ENCODE measurements at regions of chr17 and their contacts with region 1.

Region 1: DNA sequence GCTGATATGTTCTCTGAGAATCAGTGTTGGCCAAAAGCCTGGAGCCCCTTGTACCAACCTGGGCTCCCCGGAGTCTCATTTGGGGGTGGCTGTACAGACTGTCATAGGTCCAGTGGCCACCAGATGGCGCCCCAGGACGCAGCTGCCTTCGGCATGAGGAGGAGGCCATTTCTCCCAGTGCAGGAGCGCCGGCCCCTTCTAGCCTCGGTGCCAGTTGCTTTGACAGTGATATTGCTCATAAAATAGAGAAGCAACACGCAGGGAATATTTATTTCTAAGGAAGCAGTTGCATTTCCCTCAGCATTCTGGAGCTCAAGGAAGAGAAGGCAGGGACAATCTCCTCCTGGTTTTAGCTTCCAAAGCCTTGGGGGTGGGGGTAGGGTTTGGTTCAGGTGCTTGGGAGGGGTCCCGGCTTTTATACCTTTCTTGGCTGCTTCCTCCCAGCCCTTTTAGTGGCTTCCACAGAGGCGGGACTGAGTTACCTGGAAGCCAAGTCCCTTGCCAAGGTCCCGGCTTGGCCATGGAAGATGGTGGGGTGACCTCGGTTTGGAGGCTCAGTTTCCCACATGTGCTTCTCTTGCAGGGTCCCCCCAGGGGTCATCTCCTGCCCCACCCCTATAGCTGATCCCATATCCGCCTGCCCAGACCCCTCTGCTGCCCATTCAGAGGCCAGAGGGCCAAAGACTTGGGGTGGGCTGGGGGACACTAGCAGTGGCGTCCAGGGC is 117.8 kb upstream of the CDC42EP4 start:
- DNase-seq: peak; percentile 46 to 98
- H3K4me3 ChIP-seq: no peak overlapping the region
- H3K27ac ChIP-seq: no peak overlapping the region
- H3K4me1 ChIP-seq: peaks cover 0 to 6% (median 1%) of the 10 kb centered on the region in 4 experiments; a peak in 3 of 7 replicates
- H3K27me3 ChIP-seq: no peaks in the 10 kb centered on the region
- CTCF ChIP-seq: peak; percentile 92 to 97 (median 92)
- EP300 ChIP-seq: no peak
- POLR2A ChIP-seq: no peak
- RAD21 ChIP-seq: peak; percentile 96 to 98

Region 2: DNA sequence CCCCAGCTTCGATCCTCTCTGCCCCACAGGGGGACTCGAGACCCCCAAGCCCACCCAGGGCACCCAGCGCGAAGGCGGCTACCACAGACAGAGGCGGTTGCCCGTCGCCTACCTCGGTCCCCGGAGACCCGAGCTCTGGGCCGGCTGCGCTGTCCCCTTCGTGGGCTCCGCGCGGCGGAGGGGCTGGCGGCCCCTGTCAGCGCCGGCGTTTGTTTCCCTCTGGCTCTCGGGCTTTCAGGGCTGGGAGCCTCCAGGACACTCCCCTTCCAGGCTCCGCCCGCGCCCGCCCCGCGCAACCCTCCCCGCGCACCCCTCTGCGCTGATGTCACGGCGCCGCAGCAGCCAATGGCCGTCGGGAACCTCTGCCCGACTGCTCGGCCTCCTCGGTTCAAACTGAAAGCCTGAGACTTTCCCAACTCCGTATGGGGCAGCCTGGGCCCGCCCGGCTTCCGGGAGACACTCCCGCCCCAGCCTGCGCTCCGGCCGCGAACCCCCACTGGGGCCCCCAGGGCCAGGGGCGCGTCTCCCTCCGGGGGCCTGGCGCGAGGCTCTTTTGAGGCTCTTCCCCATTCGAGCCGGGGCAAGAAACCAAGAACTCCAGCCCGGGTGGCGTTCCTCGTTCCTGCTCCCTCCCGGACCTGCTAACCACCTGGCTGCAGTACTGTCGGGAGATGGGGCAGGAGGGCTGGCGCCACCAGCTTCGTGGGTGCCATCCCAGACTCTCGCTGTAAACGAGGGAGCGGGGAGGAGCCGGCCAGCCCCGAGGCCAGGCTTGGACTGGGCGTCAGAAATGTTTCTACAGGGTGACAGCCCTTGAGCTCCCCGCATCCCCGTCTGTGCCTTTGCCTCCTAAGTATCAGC is 117.6 kb before region 1 on chr17 and contains the start of gene CDC42EP4:
- CTCF ChIA-PET with region 1: no interaction called
- POLR2A ChIA-PET with region 1: no interaction called
- DNase-seq: peak in 1 of 2 experiments; percentile 96
- H3K4me3 ChIP-seq: peak within 1 kb of the TSS; percentile 78 to 92 (median 82)
- H3K27ac ChIP-seq: no peak within 1 kb of the TSS
- H3K4me1 ChIP-seq: peaks cover 2 to 24% (median 20%) of the 10 kb centered on the region in 4 experiments
- H3K27me3 ChIP-seq: peaks cover 0 to 10% (median 5%) of the 10 kb centered on the region in 4 experiments; a peak in 3 of 7 replicates
- CTCF ChIP-seq: no peak
- EP300 ChIP-seq: no peak
- POLR2A ChIP-seq: no peak
- RAD21 ChIP-seq: no peak
- total RNA-seq, gene CDC42EP4: 12.6 and 13.1 TPM in 2 replicates

Region 3: DNA sequence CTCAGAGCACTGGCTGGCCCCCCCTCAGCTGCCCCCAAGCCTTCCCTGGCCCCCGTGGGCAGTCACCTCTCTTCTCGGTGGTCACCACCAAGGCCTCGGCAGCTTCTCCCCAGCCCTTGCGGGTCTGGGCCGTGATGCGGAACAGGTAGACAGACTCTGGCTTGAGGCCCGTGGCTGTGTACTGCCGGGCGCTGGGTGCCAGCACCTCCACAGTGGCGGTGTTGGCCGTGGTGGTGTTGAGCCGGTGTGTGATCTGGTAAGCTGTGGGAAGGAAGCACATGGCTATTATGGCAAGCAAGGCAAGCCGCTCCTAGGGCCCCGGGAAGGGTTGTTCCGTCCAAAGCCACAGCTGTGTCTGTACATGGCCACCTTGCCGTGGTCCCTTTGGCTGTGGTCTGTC is 39.4 kb before region 1 on chr17:
- CTCF ChIA-PET with region 1: interaction called, 10 read pairs
- POLR2A ChIA-PET with region 1: no interaction called
- DNase-seq: no peak
- H3K4me3 ChIP-seq: no peak overlapping the region
- H3K27ac ChIP-seq: no peak overlapping the region
- H3K4me1 ChIP-seq: no peaks in the 10 kb centered on the region; a peak in 2 of 7 replicates
- H3K27me3 ChIP-seq: no peaks in the 10 kb centered on the region
- CTCF ChIP-seq: no peak
- EP300 ChIP-seq: no peak
- POLR2A ChIP-seq: no peak
- RAD21 ChIP-seq: no peak

Region 4: GRCh38 chr17:73455050-73455687 is 25.6 kb after region 1 on chr17:
- CTCF ChIA-PET with region 1: interaction called, 12 read pairs
- POLR2A ChIA-PET with region 1: no interaction called
- DNase-seq: no peak
- H3K4me3 ChIP-seq: no peak overlapping the region
- H3K27ac ChIP-seq: no peak overlapping the region
- H3K4me1 ChIP-seq: peaks cover 0 to 2% (median 0%) of the 10 kb centered on the region in 4 experiments; a peak in 1 of 7 replicates
- H3K27me3 ChIP-seq: no peaks in the 10 kb centered on the region
- CTCF ChIP-seq: no peak
- EP300 ChIP-seq: no peak
- POLR2A ChIP-seq: no peak
- RAD21 ChIP-seq: no peak

Region 5: GRCh38 chr17:73551759-73552158 is 122.2 kb after region 1 on chr17:
- CTCF ChIA-PET with region 1: interaction called, 16 read pairs
- POLR2A ChIA-PET with region 1: interaction called, 3 read pairs
- DNase-seq: no peak
- H3K4me3 ChIP-seq: no peak overlapping the region
- H3K27ac ChIP-seq: no peak overlapping the region
- H3K4me1 ChIP-seq: peaks cover 0 to 25% (median 14%) of the 10 kb centered on the region in 4 experiments; a peak in 6 of 7 replicates
- H3K27me3 ChIP-seq: no peaks in the 10 kb centered on the region; a peak in 1 of 7 replicates
- CTCF ChIP-seq: no peak
- EP300 ChIP-seq: no peak
- POLR2A ChIP-seq: no peak
- RAD21 ChIP-seq: no peak

Region 6: GRCh38 chr17:73635101-73635817 is 205.7 kb after region 1 on chr17:
- CTCF ChIA-PET with region 1: interaction called, 11 read pairs
- POLR2A ChIA-PET with region 1: no interaction called
- DNase-seq: no peak
- H3K4me3 ChIP-seq: no peak overlapping the region
- H3K27ac ChIP-seq: no peak overlapping the region
- H3K4me1 ChIP-seq: no peaks in the 10 kb centered on the region
- H3K27me3 ChIP-seq: no peaks in the 10 kb centered on the region
- CTCF ChIP-seq: no peak
- EP300 ChIP-seq: no peak
- POLR2A ChIP-seq: no peak
- RAD21 ChIP-seq: peak in 1 of 2 experiments; percentile 16; a peak in 1 of 4 replicates

Measured in H1 (cell line).